ENCODE measurements at regions of chr5 and their contacts with region 1.

Region 1: DNA sequence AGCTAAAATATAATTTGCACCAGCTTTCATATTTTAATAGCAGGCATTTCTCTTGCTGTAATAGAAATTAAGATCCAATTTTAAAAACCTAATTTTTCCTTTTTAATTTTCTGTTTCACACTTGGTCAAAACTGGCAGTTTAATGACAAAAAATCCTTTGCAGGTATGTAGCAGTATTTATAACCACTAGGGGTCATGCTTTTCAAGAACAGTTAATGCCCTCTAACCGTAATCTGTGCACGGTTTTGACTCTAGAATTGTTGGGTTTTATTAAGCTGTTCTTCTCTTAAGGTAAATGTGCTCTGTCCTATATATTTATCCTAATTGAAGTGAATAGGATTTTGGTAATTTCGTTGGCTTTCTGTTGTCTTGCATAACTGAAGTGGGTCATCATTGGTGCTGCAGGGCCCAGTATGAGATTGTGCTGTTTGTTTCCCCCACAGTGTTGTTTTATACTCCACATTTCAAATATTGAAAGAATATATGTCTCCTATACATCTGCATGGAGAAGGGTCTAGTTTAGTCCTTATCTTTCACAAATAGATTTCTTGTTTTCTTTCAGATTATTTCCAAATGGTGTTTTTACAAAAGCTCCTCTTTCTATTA is 107.4 kb downstream of the SCAMP1 start:
- DNase-seq: no peak
- ATAC-seq: peak in 3 of 4 donors; percentile 61 to 77 (median 75)
- H3K4me3 ChIP-seq: no peak overlapping the region
- H3K27ac ChIP-seq: no peak overlapping the region
- H3K4me1 ChIP-seq: peaks cover 0 to 6% (median 0%) of the 10 kb centered on the region in 12 donors
- H3K27me3 ChIP-seq: no peaks in the 10 kb centered on the region
- CTCF ChIP-seq: peak; percentile 69 to 86 (median 80)
- POLR2A ChIP-seq: no peak

Region 2: DNA sequence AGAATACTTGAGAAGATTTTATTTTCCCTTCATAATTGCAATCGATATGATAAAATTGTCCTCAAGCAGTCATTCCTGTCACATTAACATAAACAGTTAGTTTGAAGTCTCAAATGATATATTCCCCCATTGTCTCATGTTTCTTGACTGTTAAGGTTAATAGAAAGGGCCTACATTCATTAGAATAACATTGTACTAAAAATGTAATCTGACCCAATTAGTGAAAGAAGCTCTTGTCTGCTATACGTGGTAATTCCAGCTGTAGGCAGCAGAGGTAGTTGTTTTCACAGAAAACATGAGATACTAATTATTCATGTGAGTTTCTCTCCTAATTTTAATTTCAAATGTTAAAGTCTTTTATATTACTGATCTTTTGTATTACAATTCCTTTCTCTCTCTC is 147.5 kb before region 1 on chr5:
- intact Hi-C with region 1: loop called in 1 of 10 experiments (anchors 10 kb)
- DNase-seq: no peak
- ATAC-seq: no peak
- H3K4me3 ChIP-seq: no peak overlapping the region
- H3K27ac ChIP-seq: no peak overlapping the region
- H3K4me1 ChIP-seq: no peaks in the 10 kb centered on the region
- H3K27me3 ChIP-seq: no peaks in the 10 kb centered on the region
- CTCF ChIP-seq: peak; percentile 44 to 71 (median 58)
- POLR2A ChIP-seq: no peak

Region 3: GRCh38 chr5:78537821-78538220 is 70.0 kb after region 1 on chr5:
- intact Hi-C with region 1: loop called in 4 of 10 experiments (anchors 5 kb)
- DNase-seq: no peak
- ATAC-seq: peak; percentile 57 to 81 (median 68)
- H3K4me3 ChIP-seq: no peak overlapping the region
- H3K27ac ChIP-seq: peak overlapping the region in 1 of 12 donors; percentile 6
- H3K4me1 ChIP-seq: peaks cover 0 to 72% (median 20%) of the 10 kb centered on the region in 12 donors
- H3K27me3 ChIP-seq: no peaks in the 10 kb centered on the region
- CTCF ChIP-seq: peak in 11 of 12 donors; percentile 30 to 71 (median 62)
- POLR2A ChIP-seq: no peak

Region 4: GRCh38 chr5:78638423-78638822 is 170.6 kb after region 1 on chr5:
- intact Hi-C with region 1: loop called in 3 of 10 experiments (anchors 10 kb)
- DNase-seq: peak; percentile 65 to 87 (median 71)
- ATAC-seq: peak; percentile 82 to 93 (median 92)
- H3K4me3 ChIP-seq: peak overlapping the region in 1 of 12 donors; percentile 17
- H3K27ac ChIP-seq: peak overlapping the region in 10 of 12 donors; percentile 17 to 60 (median 40)
- H3K4me1 ChIP-seq: peaks cover 4 to 73% (median 43%) of the 10 kb centered on the region in 12 donors
- H3K27me3 ChIP-seq: no peaks in the 10 kb centered on the region
- CTCF ChIP-seq: no peak
- POLR2A ChIP-seq: no peak

Region 5: GRCh38 chr5:78886341-78887230 is 418.7 kb after region 1 on chr5:
- intact Hi-C with region 1: loop called in 1 of 10 experiments (anchors 5 kb)
- DNase-seq: no peak
- ATAC-seq: no peak
- H3K4me3 ChIP-seq: no peak overlapping the region
- H3K27ac ChIP-seq: no peak overlapping the region
- H3K4me1 ChIP-seq: peaks cover 0 to 17% (median 3%) of the 10 kb centered on the region in 12 donors
- H3K27me3 ChIP-seq: no peaks in the 10 kb centered on the region
- CTCF ChIP-seq: peak; percentile 39 to 71 (median 51)
- POLR2A ChIP-seq: no peak

Region 6: GRCh38 chr5:78964887-78965286 is 497.0 kb after region 1 on chr5:
- intact Hi-C with region 1: loop called in 8 of 10 experiments (anchors 2 to 10 kb)
- DNase-seq: no peak
- ATAC-seq: peak; percentile 71 to 86 (median 81)
- H3K4me3 ChIP-seq: no peak overlapping the region
- H3K27ac ChIP-seq: no peak overlapping the region
- H3K4me1 ChIP-seq: no peaks in the 10 kb centered on the region
- H3K27me3 ChIP-seq: no peaks in the 10 kb centered on the region
- CTCF ChIP-seq: peak in 11 of 12 donors; percentile 36 to 69 (median 61)
- POLR2A ChIP-seq: no peak

Region 7: GRCh38 chr5:79093762-79094161 is 625.9 kb after region 1 on chr5:
- intact Hi-C with region 1: no loop called
- DNase-seq: no peak
- ATAC-seq: no peak
- H3K4me3 ChIP-seq: no peak overlapping the region
- H3K27ac ChIP-seq: no peak overlapping the region
- H3K4me1 ChIP-seq: no peaks in the 10 kb centered on the region
- H3K27me3 ChIP-seq: no peaks in the 10 kb centered on the region
- CTCF ChIP-seq: no peak
- POLR2A ChIP-seq: no peak